IMR-90 (cell line): ENCODE measurements at regions of chr14 and their contacts with region 1.

Region 1: GRCh38 chr14:43858981-43859380 is 648.1 kb downstream of the FSCB start:
- DNase-seq: no peak
- ATAC-seq: no peak
- H3K4me3 ChIP-seq: no peak overlapping the region
- H3K27ac ChIP-seq: no peak overlapping the region
- H3K4me1 ChIP-seq: no peaks in the 10 kb centered on the region
- H3K27me3 ChIP-seq: no peaks in the 10 kb centered on the region
- CTCF ChIP-seq: no peak
- POLR2A ChIP-seq: no peak
- RAD21 ChIP-seq: no peak

Region 2: GRCh38 chr14:43591776-43592175 is 267.2 kb before region 1 on chr14:
- CTCF ChIA-PET with region 1: no interaction called
- POLR2A ChIA-PET with region 1: no interaction called
- dilution Hi-C with region 1: no loop called
- in situ Hi-C with region 1: no loop called
- intact Hi-C with region 1: no loop called
- DNase-seq: no peak
- ATAC-seq: no peak
- H3K4me3 ChIP-seq: no peak overlapping the region
- H3K27ac ChIP-seq: no peak overlapping the region
- H3K4me1 ChIP-seq: no peaks in the 10 kb centered on the region
- H3K27me3 ChIP-seq: no peaks in the 10 kb centered on the region
- CTCF ChIP-seq: no peak
- POLR2A ChIP-seq: no peak
- RAD21 ChIP-seq: no peak

Region 3: GRCh38 chr14:43765474-43765873 is 93.5 kb before region 1 on chr14:
- CTCF ChIA-PET with region 1: no interaction called
- POLR2A ChIA-PET with region 1: no interaction called
- dilution Hi-C with region 1: no loop called
- in situ Hi-C with region 1: no loop called
- intact Hi-C with region 1: no loop called
- DNase-seq: no peak
- ATAC-seq: no peak
- H3K4me3 ChIP-seq: no peak overlapping the region
- H3K27ac ChIP-seq: no peak overlapping the region
- H3K4me1 ChIP-seq: no peaks in the 10 kb centered on the region
- H3K27me3 ChIP-seq: no peaks in the 10 kb centered on the region
- CTCF ChIP-seq: no peak
- POLR2A ChIP-seq: no peak
- RAD21 ChIP-seq: no peak

Region 4: GRCh38 chr14:43795600-43796228 is 63.3 kb before region 1 on chr14:
- CTCF ChIA-PET with region 1: no interaction called
- POLR2A ChIA-PET with region 1: no interaction called
- dilution Hi-C with region 1: no loop called
- in situ Hi-C with region 1: no loop called
- intact Hi-C with region 1: no loop called
- DNase-seq: peak; percentile 0
- ATAC-seq: no peak
- H3K4me3 ChIP-seq: no peak overlapping the region
- H3K27ac ChIP-seq: no peak overlapping the region
- H3K4me1 ChIP-seq: no peaks in the 10 kb centered on the region
- H3K27me3 ChIP-seq: no peaks in the 10 kb centered on the region
- CTCF ChIP-seq: peak; percentile 15; the same call in 1 of the 2 replicates
- POLR2A ChIP-seq: no peak
- RAD21 ChIP-seq: no peak; the same call in 1 of the 2 replicates

Region 5: DNA sequence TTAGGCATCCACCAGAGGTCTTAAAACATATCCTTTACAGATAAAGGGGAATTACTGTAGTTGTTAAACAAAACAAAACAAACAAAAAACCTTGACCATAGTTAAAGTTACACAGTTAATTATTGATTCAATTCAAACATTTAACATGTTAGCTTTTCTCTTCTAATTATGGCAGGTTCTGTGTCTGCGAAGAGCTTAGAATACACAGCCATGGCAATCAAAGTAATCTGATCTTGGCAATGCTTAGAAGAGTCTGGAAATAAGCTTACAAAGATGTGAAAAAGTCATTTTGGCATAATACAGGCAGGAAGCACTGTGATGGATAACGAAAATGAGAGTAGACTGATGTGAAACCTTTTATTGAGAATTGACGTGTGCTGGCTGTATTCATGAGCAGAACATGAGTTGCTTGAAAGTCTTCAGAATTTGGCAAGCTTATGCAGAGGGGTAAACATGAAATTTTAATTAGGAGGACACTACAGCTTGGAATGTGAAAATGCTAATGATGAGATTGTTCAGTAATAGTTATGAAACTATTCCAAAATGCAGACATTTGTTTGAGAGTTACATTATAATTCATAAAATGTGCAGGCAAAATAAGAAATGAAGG is 18.5 kb after region 1 on chr14:
- CTCF ChIA-PET with region 1: no interaction called
- POLR2A ChIA-PET with region 1: no interaction called
- dilution Hi-C with region 1: no loop called
- in situ Hi-C with region 1: no loop called
- intact Hi-C with region 1: no loop called
- DNase-seq: no peak
- ATAC-seq: no peak
- H3K4me3 ChIP-seq: no peak overlapping the region
- H3K27ac ChIP-seq: no peak overlapping the region
- H3K4me1 ChIP-seq: no peaks in the 10 kb centered on the region
- H3K27me3 ChIP-seq: no peaks in the 10 kb centered on the region
- CTCF ChIP-seq: no peak
- POLR2A ChIP-seq: no peak
- RAD21 ChIP-seq: no peak

Region 6: DNA sequence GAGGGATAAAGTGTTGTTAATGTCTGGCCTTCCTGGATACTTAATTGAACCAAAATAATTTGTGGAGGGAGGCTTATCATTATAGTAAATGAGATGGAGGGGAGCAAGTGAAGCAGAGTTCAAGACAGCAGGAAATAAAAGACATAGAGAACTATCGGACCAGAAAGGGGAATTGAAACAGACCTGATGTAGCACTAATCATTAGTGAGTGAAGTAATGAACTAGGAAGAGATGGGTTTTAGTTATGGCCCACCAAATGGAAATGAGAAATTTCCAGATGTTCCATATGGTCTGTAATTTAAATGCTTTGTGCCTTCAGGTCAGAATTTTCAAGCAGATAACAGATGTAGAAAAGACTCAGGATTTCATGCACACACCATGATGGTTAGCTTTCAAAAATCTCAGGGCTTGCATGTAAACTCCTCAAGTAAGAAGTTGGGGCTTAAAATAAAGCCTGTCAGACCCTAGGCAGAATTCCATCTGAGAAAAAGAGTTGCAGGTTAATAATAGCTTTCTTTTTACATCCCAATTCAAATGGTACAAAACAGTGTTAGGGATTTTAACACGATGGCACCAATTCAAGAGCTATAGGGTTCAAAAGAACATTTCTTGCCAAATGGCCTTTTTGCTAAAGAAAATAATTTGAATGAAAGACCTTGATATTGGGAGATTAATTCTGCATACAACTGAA is 292.3 kb after region 1 on chr14:
- CTCF ChIA-PET with region 1: no interaction called
- POLR2A ChIA-PET with region 1: interaction called, 10 read pairs
- dilution Hi-C with region 1: no loop called
- in situ Hi-C with region 1: no loop called
- intact Hi-C with region 1: no loop called
- DNase-seq: no peak
- ATAC-seq: no peak
- H3K4me3 ChIP-seq: no peak overlapping the region
- H3K27ac ChIP-seq: no peak overlapping the region
- H3K4me1 ChIP-seq: no peaks in the 10 kb centered on the region
- H3K27me3 ChIP-seq: no peaks in the 10 kb centered on the region
- CTCF ChIP-seq: no peak
- POLR2A ChIP-seq: no peak
- RAD21 ChIP-seq: no peak